ENCODE measurements at regions of chr2 and their contacts with region 1.

Region 1: GRCh38 chr2:168118733-168119514 is 128.5 kb downstream of the STK39 start:
- DNase-seq: peak in 1 of 10 donors; percentile 19
- H3K4me3 ChIP-seq: no peak overlapping the region
- H3K27ac ChIP-seq: peak overlapping the region in 41 of 59 donors; percentile 4 to 70 (median 44)
- H3K27me3 ChIP-seq: no peaks in the 10 kb centered on the region
- CTCF ChIP-seq: peak; percentile 64 to 94 (median 83)

Region 2: GRCh38 chr2:167127135-167127534 is 991.8 kb before region 1 on chr2:
- intact Hi-C with region 1: loop called in 1 of 2 experiments (anchors 10 kb)
- DNase-seq: peak in 1 of 10 donors; percentile 9
- H3K4me3 ChIP-seq: no peak overlapping the region
- H3K27ac ChIP-seq: no peak overlapping the region
- H3K27me3 ChIP-seq: no peaks in the 10 kb centered on the region
- CTCF ChIP-seq: peak in 16 of 56 donors; percentile 6 to 37 (median 14)

Region 3: DNA sequence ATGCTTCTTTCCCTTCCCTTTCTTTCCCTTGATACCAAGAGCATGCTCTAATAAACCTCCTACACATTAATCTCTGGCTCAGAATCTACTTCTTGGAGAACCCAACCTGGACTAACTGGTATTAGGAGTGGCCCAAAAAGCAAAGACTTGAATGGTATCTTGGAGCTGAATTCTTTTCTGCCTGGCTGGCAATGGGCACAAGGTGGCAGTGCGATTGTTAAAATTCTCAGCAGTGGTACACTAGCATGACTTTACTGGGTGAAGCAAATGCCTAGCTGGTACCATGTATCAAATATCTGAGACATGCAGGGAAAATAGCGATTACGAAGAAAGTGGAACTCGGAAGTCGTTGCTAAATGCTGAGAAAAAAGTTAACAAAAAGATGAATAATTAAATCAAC is 854.5 kb before region 1 on chr2:
- intact Hi-C with region 1: loop called (anchors 5 to 10 kb)
- DNase-seq: peak in 8 of 10 donors; percentile 9 to 64 (median 49)
- H3K4me3 ChIP-seq: no peak overlapping the region
- H3K27ac ChIP-seq: no peak overlapping the region
- H3K27me3 ChIP-seq: no peaks in the 10 kb centered on the region
- CTCF ChIP-seq: peak in 55 of 56 donors; percentile 24 to 70 (median 49)

Region 4: DNA sequence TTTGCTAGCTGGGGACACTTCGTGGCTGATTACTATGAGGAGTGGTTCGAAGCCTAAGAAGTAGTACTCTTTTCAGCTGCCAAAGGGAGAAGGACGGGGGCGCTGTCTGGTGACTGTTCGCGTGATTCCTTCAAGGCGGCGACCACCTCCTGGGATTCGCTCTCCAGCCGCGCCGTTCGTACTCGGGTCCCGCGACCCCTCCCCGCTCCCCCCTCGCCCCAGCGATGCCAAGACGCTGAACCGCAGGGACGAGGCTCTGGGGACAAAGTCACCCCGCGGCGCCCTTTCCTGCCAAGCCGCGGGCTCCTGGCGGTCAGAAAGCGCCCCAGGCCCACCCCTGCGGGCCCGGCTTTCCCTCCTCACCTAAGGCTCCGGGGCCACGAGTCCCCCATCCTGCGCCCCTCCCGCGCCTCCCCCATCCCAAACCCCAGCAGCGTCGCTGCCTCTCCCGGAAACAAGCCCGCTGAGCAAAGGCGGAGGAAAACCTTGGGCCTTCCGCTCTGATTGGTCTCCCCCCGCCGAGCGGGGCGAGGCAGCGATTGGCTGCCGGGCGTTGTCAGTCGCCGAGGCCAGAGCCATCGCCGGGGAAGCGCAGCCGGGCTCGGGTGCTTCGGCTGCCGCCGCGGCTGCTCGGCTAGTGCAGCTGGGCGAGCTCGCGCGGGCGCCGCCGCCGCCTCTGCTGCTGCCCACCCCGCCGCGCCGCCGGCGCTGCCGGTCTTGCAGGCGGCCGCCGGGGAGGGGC is 826.3 kb before region 1 on chr2:
- intact Hi-C with region 1: loop called in 1 of 2 experiments (anchors 10 kb)
- DNase-seq: peak; percentile 72 to 95 (median 88)
- H3K4me3 ChIP-seq: peak within 1 kb of the TSS; percentile 65 to 94 (median 83)
- H3K27ac ChIP-seq: peak within 1 kb of the TSS; percentile 78 to 99 (median 97)
- H3K27me3 ChIP-seq: no peaks in the 10 kb centered on the region
- CTCF ChIP-seq: peak in 53 of 56 donors; percentile 2 to 68 (median 43)

Region 5: DNA sequence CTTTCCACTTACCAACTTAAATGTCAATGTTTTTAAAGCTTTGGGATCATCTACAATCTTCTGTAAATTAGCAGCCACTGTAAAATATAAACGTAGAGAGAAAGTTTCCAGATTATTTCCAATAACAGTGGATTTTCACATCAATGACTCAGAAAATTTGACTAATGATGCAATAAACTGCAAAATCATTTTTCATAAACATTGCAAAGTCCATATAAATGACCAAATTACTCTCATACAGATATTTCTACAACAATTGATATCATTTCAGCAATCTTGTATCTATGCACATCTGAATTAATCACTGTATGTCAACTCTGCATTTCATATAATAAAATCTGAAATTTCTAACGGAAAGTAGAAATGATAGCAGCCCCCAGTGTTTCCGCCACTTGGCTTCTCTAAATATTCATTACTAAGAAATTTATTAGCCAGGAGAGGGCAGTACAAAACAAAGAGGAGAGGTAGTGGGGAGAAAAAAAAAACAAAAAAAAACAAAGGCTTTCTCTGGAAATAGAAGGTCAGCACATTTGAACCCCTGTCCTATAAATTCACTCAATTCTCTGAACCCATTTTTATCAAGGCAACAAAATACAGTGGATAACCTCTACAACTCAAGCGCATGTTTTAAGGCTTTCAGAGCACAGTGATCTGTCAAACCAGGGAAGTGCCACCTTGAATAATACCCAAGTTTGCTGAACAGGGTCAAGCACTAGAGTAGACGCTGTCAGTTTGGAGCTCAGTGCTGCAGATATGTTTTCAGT is 154.1 kb before region 1 on chr2:
- intact Hi-C with region 1: loop called (anchors 1 to 5 kb)
- DNase-seq: no peak
- H3K4me3 ChIP-seq: no peak overlapping the region
- H3K27ac ChIP-seq: no peak overlapping the region
- H3K27me3 ChIP-seq: no peaks in the 10 kb centered on the region
- CTCF ChIP-seq: peak in 53 of 56 donors; percentile 26 to 76 (median 53)

Measured in dorsolateral prefrontal cortex (tissue), 120 donors.